Testis (tissue), 5 donors: ENCODE measurements at regions of chr10 and their contacts with region 1.

Region 1: GRCh38 chr10:92087750-92088395 is 164.3 kb downstream of the BTAF1 start:
- DNase-seq: peak; percentile 83
- H3K4me3 ChIP-seq: no peak overlapping the region
- H3K27ac ChIP-seq: no peak overlapping the region
- H3K4me1 ChIP-seq: no peaks in the 10 kb centered on the region
- H3K27me3 ChIP-seq: no peaks in the 10 kb centered on the region
- CTCF ChIP-seq: peak; percentile 64 to 84 (median 77)
- POLR2A ChIP-seq: no peak

Region 2: DNA sequence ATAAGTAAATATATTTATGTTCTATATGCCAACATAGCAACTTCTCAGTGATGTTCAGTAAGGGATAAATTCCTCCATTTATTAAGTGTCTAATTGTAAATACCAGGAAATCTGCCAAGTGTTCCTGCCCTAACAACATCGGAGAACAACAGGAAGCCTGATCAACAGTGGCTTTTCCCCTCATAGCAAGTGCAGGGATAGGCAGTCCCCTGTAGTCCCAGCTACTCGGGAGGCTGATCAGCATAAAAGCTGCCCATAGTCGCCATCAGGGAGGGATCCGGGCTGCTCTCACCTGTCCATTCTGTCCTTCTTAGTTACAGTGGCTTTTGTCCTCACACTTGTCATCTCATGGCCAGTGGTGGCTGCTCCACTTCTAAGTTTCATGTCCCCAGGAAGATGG is 344.7 kb after region 1 on chr10:
- intact Hi-C with region 1: loop called (anchors 10 kb)
- DNase-seq: no peak
- H3K4me3 ChIP-seq: no peak overlapping the region
- H3K27ac ChIP-seq: no peak overlapping the region
- H3K4me1 ChIP-seq: no peaks in the 10 kb centered on the region
- H3K27me3 ChIP-seq: no peaks in the 10 kb centered on the region
- CTCF ChIP-seq: no peak
- POLR2A ChIP-seq: no peak